ENCODE measurements at regions of chr5 and their contacts with region 1.

Region 1: DNA sequence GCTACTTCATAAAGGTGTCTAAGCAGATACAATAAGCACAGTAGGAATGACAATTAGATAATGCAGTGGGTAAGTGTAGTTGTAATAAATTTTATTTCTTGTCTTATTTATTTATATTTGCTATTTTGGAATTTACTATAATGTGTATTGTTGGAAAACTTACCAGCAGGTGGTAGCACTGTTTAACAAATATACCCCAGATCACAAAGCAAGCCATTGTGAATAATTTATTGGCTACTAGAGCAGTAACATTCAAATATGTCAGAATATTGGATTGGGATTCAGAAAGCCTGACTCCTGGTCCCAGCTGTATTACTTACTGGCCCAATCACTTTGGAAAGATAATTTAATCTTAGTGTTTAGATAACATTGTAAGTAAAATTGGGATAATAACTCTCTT is 78.0 kb downstream of the ISOC1 start:
- DNase-seq: peak; percentile 5
- H3K4me3 Mint-ChIP-seq: no peak overlapping the region
- H3K27ac Mint-ChIP-seq: no peak overlapping the region
- H3K4me1 Mint-ChIP-seq: no peaks in the 10 kb centered on the region
- H3K27me3 Mint-ChIP-seq: no peaks in the 10 kb centered on the region
- CTCF ChIP-seq: no peak

Region 2: GRCh38 chr5:129125810-129126209 is 46.8 kb before region 1 on chr5:
- CTCF ChIA-PET with region 1: no interaction called
- intact Hi-C with region 1: no loop called
- DNase-seq: no peak
- H3K4me3 Mint-ChIP-seq: no peak overlapping the region
- H3K27ac Mint-ChIP-seq: no peak overlapping the region
- H3K4me1 Mint-ChIP-seq: no peaks in the 10 kb centered on the region
- H3K27me3 Mint-ChIP-seq: no peaks in the 10 kb centered on the region
- CTCF ChIP-seq: no peak

Region 3: DNA sequence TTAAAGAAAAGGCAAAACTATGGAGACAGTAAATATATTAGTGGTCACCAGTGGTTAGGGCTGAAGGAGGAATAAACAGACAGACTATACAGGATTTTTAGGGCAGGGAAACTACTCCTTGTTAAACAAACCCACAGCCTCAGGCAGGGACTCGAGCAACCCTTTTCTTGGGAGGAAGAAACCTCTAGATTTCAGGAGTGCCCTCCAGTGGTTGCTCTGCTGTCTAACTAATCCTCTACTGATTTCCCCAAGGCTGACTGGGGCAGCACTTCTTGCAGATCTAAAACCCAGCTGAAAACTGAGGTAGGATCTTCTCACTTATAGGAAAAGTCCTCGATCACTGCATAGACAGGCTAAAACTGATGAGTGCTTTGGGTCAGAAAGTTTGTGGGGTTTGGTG is 98.7 kb after region 1 on chr5:
- CTCF ChIA-PET with region 1: no interaction called
- intact Hi-C with region 1: loop called (anchors 1 kb)
- DNase-seq: peak; percentile 36
- H3K4me3 Mint-ChIP-seq: no peak overlapping the region
- H3K27ac Mint-ChIP-seq: no peak overlapping the region
- H3K4me1 Mint-ChIP-seq: no peaks in the 10 kb centered on the region
- H3K27me3 Mint-ChIP-seq: no peaks in the 10 kb centered on the region
- CTCF ChIP-seq: peak; percentile 30

Region 4: GRCh38 chr5:129379406-129379805 is 206.8 kb after region 1 on chr5:
- CTCF ChIA-PET with region 1: no interaction called
- intact Hi-C with region 1: no loop called
- DNase-seq: no peak
- H3K4me3 Mint-ChIP-seq: no peak overlapping the region
- H3K27ac Mint-ChIP-seq: no peak overlapping the region
- H3K4me1 Mint-ChIP-seq: peaks cover 8% of the 10 kb centered on the region
- H3K27me3 Mint-ChIP-seq: no peaks in the 10 kb centered on the region
- CTCF ChIP-seq: no peak

Region 5: DNA sequence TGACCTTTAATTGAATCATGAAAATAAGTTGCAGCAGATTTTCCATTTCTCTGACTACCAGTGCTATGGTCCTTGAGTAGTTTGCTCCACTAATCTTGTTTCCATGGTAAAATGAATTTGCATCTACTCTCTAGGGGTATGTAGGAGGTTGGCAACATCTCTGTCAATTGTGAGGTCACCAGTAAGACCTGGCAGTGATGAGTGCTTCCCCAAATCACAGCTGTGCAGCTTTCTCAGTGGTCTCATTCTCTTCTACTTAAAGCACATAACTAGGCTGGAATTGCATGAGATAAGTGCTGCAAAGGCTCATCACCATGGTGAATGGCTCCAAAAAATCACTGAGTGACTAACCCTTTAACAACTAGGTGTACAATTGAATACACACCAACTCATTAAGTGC is 323.8 kb after region 1 on chr5:
- CTCF ChIA-PET with region 1: no interaction called
- intact Hi-C with region 1: no loop called
- DNase-seq: no peak
- H3K4me3 Mint-ChIP-seq: no peak overlapping the region
- H3K27ac Mint-ChIP-seq: no peak overlapping the region
- H3K4me1 Mint-ChIP-seq: no peaks in the 10 kb centered on the region
- H3K27me3 Mint-ChIP-seq: no peaks in the 10 kb centered on the region
- CTCF ChIP-seq: no peak